Left cardiac atrium (tissue), 4 donors: ENCODE measurements at regions of chr5 and their contacts with region 1.

Region 1: DNA sequence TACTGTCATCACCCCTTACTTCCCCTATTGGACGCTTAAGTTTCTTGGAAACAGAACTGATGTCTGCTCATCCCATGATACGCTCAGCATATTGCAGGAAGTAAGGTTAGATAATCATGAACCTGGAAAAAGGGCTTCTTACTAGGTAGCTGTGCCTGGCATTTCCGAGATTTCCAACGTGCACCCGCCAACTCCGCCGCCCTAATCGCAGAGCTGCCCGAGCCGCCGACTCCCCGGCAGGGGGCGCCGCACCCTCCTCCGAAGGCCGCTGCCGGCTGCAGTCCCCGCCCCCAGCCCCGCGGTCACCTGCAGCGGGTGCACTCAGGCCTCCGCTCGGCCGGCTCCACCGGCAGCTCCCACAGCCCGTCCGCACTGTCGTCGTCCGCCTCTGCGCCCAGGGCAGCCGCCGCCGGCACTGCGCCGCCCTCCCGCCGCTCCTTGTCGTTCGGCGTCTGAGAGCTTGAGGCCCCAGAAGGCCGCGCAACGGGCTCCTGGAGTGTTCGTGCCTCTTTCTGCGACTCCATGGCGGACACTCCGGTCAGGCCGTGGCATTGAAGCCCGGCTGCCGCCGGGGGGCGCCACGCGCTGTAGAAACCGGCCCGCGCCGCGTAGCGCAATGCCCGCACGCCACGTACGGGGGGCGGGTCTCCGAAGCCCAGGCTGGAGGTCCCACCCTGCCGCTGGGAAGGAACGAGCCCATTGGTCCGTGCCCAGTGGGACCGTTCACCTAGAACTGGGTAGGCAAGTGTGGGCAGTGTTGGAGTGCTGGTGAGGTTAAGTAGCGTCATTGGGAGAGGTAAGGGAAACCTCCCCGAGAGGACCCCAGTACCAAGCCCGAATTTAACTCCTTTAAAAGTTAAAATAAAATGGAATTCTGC is at the start of gene DTWD2:
- DNase-seq: peak; percentile 96
- ATAC-seq: peak; percentile 97 to 99
- total RNA-seq, gene DTWD2: 8.4 to 10.5 TPM

Region 2: GRCh38 chr5:119049824-119050449 is 61.7 kb after region 1 on chr5:
- intact Hi-C with region 1: no loop called
- DNase-seq: no peak
- ATAC-seq: peak; percentile 14 to 61

Region 3: GRCh38 chr5:119332978-119333401 is 344.8 kb after region 1 on chr5:
- intact Hi-C with region 1: loop called in 1 of 2 experiments (anchors 5 kb)
- DNase-seq: no peak
- ATAC-seq: no peak